HCT116 (cell line): ENCODE measurements at regions of chr4 and their contacts with region 1.

Region 1: DNA sequence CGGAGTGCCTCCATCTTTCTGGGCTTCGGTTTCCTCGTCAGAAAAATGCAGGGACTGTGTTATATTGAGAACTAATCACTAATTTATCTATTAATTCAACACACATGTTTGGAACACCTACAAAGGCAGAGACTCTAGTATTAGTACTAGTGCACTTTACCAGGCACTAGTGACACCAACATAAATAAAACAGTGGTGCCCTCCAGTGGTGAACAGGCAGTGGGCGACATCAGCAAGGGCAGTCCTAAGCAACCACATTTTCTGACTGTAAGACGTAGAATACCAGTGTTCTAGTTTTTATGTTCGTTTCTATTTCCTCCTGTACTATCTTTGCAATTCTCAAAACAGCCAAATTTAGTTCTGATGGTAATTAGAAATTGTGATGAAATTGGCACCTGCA is 69.1 kb upstream of the UCP1 start:
- DNase-seq: peak; percentile 35
- ATAC-seq: peak; percentile 86
- H3K4me3 ChIP-seq: no peak overlapping the region
- H3K27ac ChIP-seq: no peak overlapping the region
- H3K4me1 ChIP-seq: peaks cover 14 to 19% of the 10 kb centered on the region in 2 experiments
- H3K27me3 ChIP-seq: no peaks in the 10 kb centered on the region
- CTCF ChIP-seq: peak; percentile 65 to 88 (median 76); a peak in 5 of 6 replicates
- POLR2A ChIP-seq: no peak
- RAD21 ChIP-seq: peak; percentile 79

Region 2: GRCh38 chr4:140012688-140013486 is 624.9 kb before region 1 on chr4:
- CTCF ChIA-PET with region 1: no interaction called
- POLR2A ChIA-PET with region 1: no interaction called
- RAD21 ChIA-PET with region 1: no interaction called
- intact Hi-C with region 1: loop called (anchors 10 kb)
- DNase-seq: peak; percentile 50
- ATAC-seq: peak; percentile 98
- H3K4me3 ChIP-seq: no peak overlapping the region
- H3K27ac ChIP-seq: no peak overlapping the region
- H3K4me1 ChIP-seq: peaks cover 3 to 7% of the 10 kb centered on the region in 2 experiments; a peak in 2 of 4 replicates
- H3K27me3 ChIP-seq: no peaks in the 10 kb centered on the region
- CTCF ChIP-seq: peak; percentile 69 to 87 (median 78)
- POLR2A ChIP-seq: no peak
- RAD21 ChIP-seq: peak; percentile 95

Region 3: DNA sequence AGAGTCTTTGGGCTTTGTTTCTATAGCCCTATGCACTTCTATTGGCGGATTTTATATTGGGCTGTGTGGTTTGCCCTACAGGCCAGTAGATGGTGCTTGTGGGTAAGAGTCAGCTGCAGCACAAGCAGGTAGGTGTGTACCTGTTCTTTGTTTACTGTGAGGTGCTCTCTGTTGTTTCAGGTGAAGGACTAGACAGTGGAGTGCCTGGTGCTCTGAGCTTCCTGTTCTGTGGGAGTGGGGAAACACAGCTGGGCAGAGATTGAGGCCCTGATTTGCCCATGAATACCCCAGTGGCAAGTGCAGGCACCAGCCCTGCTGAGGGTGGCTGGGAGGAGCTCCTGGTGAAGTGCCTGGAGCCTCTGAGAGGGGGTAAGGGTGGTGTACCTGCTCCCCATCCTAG is 42.8 kb before region 1 on chr4:
- CTCF ChIA-PET with region 1: interaction called, 7 read pairs
- POLR2A ChIA-PET with region 1: no interaction called
- RAD21 ChIA-PET with region 1: no interaction called
- intact Hi-C with region 1: loop called (anchors 1 kb)
- DNase-seq: peak; percentile 37
- ATAC-seq: peak; percentile 100
- H3K4me3 ChIP-seq: no peak overlapping the region
- H3K27ac ChIP-seq: no peak overlapping the region
- H3K4me1 ChIP-seq: 0 out of 4 replicates have a peak, but pooled peaks cover 0 to 4% of the 10 kb centered on the region in 2 experiments
- H3K27me3 ChIP-seq: no peaks in the 10 kb centered on the region
- CTCF ChIP-seq: peak; percentile 68 to 77 (median 72); a peak in 5 of 6 replicates
- POLR2A ChIP-seq: no peak
- RAD21 ChIP-seq: peak; percentile 76